Activated naive CD4-positive, alpha-beta T cell treated with anti-CD3 and anti-CD28 coated beads, Interleukin-2, amount 10 ng/mL, durations not matched to agents 7 days and 5 days (primary cell): ENCODE measurements at regions of chr14 and their contacts with region 1.

Region 1: GRCh38 chr14:20690848-20691523 is 2.4 kb downstream of the ANG start:
- DNase-seq: peak; percentile 54
- H3K4me3 Mint-ChIP-seq: no peak overlapping the region
- H3K27ac Mint-ChIP-seq: no peak overlapping the region
- H3K4me1 Mint-ChIP-seq: peaks cover 7% of the 10 kb centered on the region
- H3K27me3 Mint-ChIP-seq: peaks cover 3% of the 10 kb centered on the region

Region 2: DNA sequence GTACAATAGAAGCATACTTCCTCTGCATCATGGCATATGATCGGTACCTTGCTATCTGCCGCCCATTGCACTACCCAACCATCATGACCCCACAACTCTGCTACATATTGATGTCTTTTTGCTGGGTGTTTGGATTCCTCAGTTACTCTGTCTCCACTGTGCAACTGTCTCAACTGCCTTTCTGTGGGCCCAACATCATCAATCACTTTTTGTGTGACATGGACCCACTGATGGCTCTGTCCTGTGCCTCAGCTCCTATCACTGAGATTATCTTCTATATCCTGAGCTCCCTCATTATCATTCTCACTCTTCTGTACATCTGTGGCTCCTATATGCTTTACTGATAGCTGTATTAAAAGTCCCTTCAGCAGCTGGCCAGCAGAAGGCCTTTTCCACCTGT is 481.4 kb before region 1 on chr14:
- CTCF ChIA-PET with region 1: no interaction called
- DNase-seq: no peak
- H3K4me3 Mint-ChIP-seq: no peak overlapping the region
- H3K27ac Mint-ChIP-seq: no peak overlapping the region
- H3K4me1 Mint-ChIP-seq: no peaks in the 10 kb centered on the region
- H3K27me3 Mint-ChIP-seq: no peaks in the 10 kb centered on the region

Region 3: DNA sequence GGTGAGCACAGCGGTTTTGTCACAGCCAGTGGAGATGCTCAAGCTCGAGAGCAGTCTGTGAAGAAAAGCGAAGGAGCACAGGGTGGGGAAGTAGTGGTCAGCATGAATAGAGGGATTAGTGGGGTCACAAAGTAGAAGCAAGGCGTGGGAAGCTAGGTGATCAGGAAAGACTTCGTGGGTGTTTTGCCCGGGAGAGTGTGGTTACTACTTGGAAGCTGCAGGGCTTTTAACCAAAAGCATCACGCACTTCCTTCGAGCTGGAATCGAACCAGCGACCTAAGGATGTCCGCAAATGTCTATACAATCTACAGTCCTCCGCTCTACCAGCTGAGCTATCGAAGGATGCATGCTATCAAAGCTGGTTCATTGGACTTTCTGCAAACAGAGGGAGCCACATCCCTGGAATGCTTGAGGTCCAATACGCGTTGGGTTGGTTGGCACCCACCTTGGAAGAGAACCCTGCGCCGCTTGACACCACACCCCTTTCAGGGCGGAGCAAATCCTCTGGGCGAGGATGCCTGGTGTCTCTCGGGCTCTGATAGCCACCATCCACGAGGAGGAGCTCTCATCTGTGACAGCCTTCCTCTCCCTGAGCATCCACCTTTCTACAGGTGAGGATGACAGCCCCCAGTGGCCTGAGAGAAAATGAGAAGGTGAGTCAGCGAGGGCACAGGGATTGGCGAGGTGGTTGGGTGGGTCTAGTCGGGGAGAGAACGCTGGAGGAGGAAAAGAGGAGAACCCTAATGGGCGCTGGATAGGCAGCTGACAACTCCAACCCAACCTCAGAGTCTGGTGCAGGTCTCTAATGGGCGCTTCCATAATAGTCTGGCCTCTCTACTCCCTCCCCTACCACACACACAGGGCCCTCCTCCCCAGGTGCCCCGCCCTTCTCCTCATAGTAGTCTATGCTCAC is 33.5 kb before region 1 on chr14:
- CTCF ChIA-PET with region 1: interaction called, 51 read pairs
- DNase-seq: peak; percentile 44
- H3K4me3 Mint-ChIP-seq: no peak overlapping the region
- H3K27ac Mint-ChIP-seq: no peak overlapping the region
- H3K4me1 Mint-ChIP-seq: peaks cover 45% of the 10 kb centered on the region
- H3K27me3 Mint-ChIP-seq: peaks cover 94% of the 10 kb centered on the region

Region 4: GRCh38 chr14:20662968-20663732 is 27.8 kb before region 1 on chr14:
- CTCF ChIA-PET with region 1: interaction called, 51 read pairs
- DNase-seq: peak; percentile 82
- H3K4me3 Mint-ChIP-seq: peak overlapping the region; percentile 68
- H3K27ac Mint-ChIP-seq: no peak overlapping the region
- H3K4me1 Mint-ChIP-seq: peaks cover 48% of the 10 kb centered on the region
- H3K27me3 Mint-ChIP-seq: peaks cover 70% of the 10 kb centered on the region